ENCODE measurements at regions of chr1 and their contacts with region 1.

Region 1: DNA sequence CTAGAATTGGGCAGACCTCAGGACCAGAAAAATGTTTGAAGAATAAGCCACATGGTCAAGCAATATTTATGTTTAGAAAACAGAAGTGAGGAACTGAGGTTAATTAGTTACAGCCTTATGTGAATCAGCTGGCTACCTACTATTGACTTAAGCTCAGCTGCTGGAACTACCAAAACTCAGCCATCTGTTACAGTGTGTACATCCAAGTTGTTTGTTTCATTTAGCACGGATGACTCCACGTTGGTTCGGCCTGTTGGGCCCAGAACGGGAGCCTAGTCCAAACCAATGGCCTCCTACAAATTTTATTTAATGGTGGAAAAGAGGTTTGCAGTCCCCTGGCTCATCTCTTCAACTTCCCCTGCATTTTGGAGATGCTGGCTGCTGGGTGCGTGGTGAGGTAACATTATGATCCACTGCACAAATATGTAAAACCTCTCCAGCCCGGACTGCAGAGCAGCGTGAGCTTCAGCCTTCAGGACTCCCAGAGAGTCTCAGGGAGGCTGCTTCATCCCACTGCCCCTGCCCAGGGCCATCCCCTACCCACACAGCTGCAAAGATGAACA is 143.4 kb downstream of the ZZZ3 start:
- DNase-seq: peak; percentile 71
- H3K4me3 ChIP-seq: no peak overlapping the region
- H3K27ac ChIP-seq: peak overlapping the region; percentile 55
- H3K4me1 ChIP-seq: peaks cover 41% of the 10 kb centered on the region
- H3K27me3 ChIP-seq: no peaks in the 10 kb centered on the region
- CTCF ChIP-seq: no peak

Region 2: DNA sequence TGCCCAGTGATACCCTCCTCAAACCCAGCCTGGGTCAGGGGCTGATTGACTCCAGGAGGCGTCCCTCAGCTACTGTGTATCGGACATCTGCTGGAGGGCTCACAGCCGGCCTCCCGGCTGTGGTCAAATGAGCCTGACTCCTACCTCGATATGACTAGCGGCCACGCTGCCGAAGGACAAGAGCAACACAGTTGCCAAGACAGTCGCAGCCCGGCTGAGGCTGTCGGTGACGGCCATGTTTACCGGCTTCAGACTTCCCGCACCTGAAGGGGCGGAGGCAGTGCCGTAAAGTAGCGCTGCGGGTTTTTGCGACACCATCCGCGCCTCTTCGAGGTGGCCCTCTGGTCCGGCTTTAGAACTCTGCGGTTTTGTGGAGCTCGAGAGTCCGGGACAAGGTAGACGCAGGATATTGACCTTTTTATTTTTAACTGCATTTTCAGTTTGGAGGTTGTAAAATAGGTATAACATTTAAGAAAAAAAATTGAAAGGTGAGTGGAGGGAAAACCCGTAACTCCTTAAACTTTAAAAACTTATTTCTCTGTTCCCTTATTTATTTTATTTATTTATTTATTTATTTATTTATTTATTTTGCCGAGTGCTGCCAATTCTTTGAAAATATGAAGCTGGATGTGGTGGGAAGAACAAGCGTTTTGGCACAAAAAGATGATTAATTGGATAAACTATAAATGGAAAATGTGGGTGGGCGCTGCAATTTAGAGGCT is 319.7 kb before region 1 on chr1 and contains the start of gene PIGK:
- CTCF ChIA-PET with region 1: no interaction called
- dilution Hi-C with region 1: no loop called
- in situ Hi-C with region 1: no loop called
- intact Hi-C with region 1: loop called (anchors 5 kb)
- DNase-seq: peak; percentile 86
- H3K4me3 ChIP-seq: peak within 1 kb of the TSS; percentile 65 to 72 (median 69)
- H3K27ac ChIP-seq: peak within 1 kb of the TSS; percentile 68
- H3K4me1 ChIP-seq: peaks cover 13% of the 10 kb centered on the region
- H3K27me3 ChIP-seq: no peaks in the 10 kb centered on the region
- CTCF ChIP-seq: peak in 1 of 2 donors; percentile 3
- total RNA-seq, gene PIGK: 19.8 to 21.7 TPM

Region 3: GRCh38 chr1:77322061-77322900 is 216.8 kb before region 1 on chr1:
- CTCF ChIA-PET with region 1: no interaction called
- dilution Hi-C with region 1: no loop called
- in situ Hi-C with region 1: loop called in 1 of 2 experiments (anchors 25 kb)
- intact Hi-C with region 1: loop called (anchors 5 kb)
- DNase-seq: peak; percentile 94
- H3K4me3 ChIP-seq: no peak overlapping the region
- H3K27ac ChIP-seq: peak overlapping the region; percentile 65
- H3K4me1 ChIP-seq: peaks cover 16% of the 10 kb centered on the region
- H3K27me3 ChIP-seq: no peaks in the 10 kb centered on the region
- CTCF ChIP-seq: no peak

Measured in mammary epithelial cell (primary cell).